ENCODE measurements at regions of chr2 and their contacts with region 1.

Region 1: DNA sequence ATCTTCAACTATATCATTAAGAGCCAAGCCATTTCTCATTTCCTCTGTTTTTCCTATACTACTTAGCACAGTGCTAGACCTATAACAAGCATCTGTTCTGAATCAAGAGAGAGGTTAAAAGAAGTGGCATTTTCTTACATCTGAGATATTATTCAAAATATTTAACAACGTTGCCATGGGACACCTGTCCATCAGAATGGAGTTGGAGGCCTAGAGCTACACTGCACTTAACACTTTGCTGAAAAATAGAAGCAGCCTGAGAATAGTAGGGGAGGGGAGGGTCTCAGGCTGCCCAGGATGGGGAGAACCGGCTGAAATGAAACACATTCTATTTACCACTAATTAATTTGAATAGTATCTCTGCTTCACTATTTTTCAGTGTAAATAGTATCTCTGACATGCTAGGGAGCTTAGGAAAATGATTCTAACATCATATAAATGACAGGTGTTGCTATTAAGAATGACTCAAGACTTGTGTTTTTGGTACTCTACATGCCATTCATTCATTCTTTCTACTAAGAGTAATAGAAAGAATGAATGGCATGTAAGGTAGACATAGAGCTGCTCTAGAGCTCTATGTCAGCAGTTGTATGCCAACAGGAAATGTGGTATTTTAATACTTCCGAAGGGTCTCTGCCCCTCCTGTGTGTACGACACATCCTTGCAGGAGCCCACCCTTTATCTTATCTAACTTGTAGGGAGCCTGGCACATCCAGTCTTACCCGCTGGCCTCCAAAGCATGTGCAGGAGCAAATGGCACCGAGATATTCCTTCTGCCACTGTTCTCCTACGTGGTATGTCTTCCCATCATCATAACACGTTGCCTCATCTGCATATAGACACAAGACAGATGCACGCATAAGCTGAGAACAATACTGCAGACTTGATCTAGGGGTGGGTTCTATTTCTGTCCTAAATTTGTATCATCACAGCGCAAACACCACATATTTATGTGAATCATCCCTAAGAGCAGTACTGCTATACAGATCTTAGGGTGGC is 52.6 kb downstream of the ATIC start:
- DNase-seq: no peak
- H3K4me3 ChIP-seq: no peak overlapping the region
- H3K27ac ChIP-seq: no peak overlapping the region
- H3K4me1 ChIP-seq: no peaks in the 10 kb centered on the region
- H3K27me3 ChIP-seq: no peaks in the 10 kb centered on the region
- CTCF ChIP-seq: no peak
- POLR2A ChIP-seq: peak; percentile 31

Region 2: DNA sequence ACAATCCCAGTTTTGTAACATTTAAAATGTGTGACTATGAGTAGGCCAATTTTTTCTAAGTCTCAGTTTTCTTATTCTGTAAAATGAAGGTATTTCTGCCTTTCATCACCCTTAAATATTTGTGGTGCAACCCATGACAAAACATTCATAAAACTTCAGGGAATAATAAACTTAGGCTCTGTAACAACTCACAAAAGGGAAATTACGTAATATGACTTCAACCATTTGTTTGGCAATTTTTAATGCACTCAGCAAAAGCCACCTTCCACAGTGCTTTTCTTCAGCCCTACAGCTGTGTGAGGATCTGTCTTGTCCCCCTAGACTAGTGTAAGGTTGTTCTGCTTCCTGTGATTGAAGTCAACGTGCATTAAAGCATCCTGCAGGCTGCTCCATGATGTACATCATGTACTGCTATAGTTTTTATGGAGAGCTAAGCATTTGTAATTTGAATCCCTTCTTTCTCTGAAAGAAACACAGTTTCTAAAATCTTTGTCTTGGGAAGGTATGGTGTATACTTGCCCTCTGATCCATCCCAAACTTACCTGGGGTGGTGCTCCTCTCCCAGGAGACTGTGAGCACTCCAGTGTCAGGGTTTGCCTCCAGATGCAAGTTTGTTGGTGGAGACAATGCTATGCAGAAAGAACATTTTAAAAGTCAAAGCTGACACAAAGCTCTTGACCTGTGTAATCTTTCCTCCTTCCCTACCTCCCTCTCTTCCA is 32.3 kb after region 1 on chr2:
- CTCF ChIA-PET with region 1: no interaction called
- POLR2A ChIA-PET with region 1: interaction called, 6 read pairs
- dilution Hi-C with region 1: no loop called
- intact Hi-C with region 1: loop called (anchors 5 kb)
- DNase-seq: no peak
- H3K4me3 ChIP-seq: no peak overlapping the region
- H3K27ac ChIP-seq: no peak overlapping the region
- H3K4me1 ChIP-seq: peaks cover 20% of the 10 kb centered on the region
- H3K27me3 ChIP-seq: no peaks in the 10 kb centered on the region
- CTCF ChIP-seq: no peak
- POLR2A ChIP-seq: no peak

Region 3: GRCh38 chr2:215737477-215737876 is 373.0 kb after region 1 on chr2:
- CTCF ChIA-PET with region 1: no interaction called
- POLR2A ChIA-PET with region 1: no interaction called
- dilution Hi-C with region 1: no loop called
- intact Hi-C with region 1: no loop called
- DNase-seq: no peak
- H3K4me3 ChIP-seq: no peak overlapping the region
- H3K27ac ChIP-seq: no peak overlapping the region
- H3K4me1 ChIP-seq: peaks cover 17% of the 10 kb centered on the region
- H3K27me3 ChIP-seq: no peaks in the 10 kb centered on the region
- CTCF ChIP-seq: no peak
- POLR2A ChIP-seq: no peak